Heart left ventricle (tissue), 16 donors: ENCODE measurements at regions of chr11 and their contacts with region 1.

Region 1: GRCh38 chr11:67401495-67402191 is at the start of gene PPP1CA:
- DNase-seq: peak; percentile 93 to 95 (median 93)
- ATAC-seq: peak; percentile 70 to 88 (median 86)
- H3K4me3 ChIP-seq: peak within 1 kb of the TSS; percentile 74 to 100 (median 86)
- H3K27ac ChIP-seq: peak within 1 kb of the TSS; percentile 91 to 99 (median 97)
- H3K4me1 ChIP-seq: peaks cover 0 to 62% (median 34%) of the 10 kb centered on the region in 12 donors
- H3K27me3 ChIP-seq: no peaks in the 10 kb centered on the region
- CTCF ChIP-seq: peak in 10 of 12 donors; percentile 20 to 88 (median 62)
- POLR2A ChIP-seq: peak; percentile 33 to 79
- total RNA-seq, gene PPP1CA: 90.3 to 151 (median 105) TPM

Region 2: DNA sequence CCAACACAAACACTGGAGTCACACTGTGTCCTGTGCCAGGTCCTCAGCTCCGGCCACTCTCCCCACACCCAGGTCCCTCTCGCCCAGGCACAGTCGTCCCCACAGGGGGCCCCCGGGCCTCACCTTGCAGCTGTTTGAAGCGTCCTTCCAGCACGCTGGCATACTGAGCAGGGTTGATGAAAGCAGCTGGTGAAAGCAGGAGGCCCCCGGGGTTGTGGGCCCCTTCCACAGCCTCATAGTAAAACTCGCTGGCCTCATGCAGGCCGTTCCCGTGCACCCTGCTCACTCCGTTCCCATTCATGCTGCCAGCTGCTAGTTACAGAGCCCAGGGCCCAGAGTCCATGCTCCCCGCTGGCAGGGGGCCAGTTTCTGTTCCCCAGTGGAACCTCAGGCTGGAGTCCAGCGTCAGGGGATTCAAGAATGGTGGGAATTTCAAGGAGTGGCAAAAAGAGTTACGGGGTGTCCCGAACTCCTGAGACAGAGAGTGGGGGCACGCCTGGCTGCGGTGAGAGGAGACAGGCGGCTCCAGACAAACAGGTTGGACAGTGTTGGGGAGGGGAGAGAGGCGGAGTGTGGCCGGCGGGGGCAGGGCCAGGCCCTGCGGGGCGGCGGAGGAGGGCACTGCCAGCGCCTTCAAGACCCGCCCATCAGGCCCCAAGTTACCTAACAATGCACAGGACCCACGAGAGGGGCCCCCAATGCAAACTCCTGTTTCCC is 683.2 kb before region 1 on chr11:
- intact Hi-C with region 1: no loop called
- DNase-seq: no peak
- ATAC-seq: no peak
- H3K4me3 ChIP-seq: no peak overlapping the region
- H3K27ac ChIP-seq: no peak overlapping the region
- H3K4me1 ChIP-seq: no peaks in the 10 kb centered on the region
- H3K27me3 ChIP-seq: peaks cover 0 to 9% (median 0%) of the 10 kb centered on the region in 9 donors
- CTCF ChIP-seq: no peak
- POLR2A ChIP-seq: no peak

Region 3: GRCh38 chr11:67420646-67421420 is 19.2 kb after region 1 on chr11:
- intact Hi-C with region 1: loop called in 2 of 10 experiments (anchors 2 kb)
- DNase-seq: peak; percentile 96 to 99 (median 97)
- ATAC-seq: peak; percentile 91 to 93 (median 92)
- H3K4me3 ChIP-seq: peak overlapping the region; percentile 32 to 89 (median 64)
- H3K27ac ChIP-seq: peak overlapping the region; percentile 79 to 97 (median 92)
- H3K4me1 ChIP-seq: peaks cover 3 to 56% (median 37%) of the 10 kb centered on the region in 12 donors
- H3K27me3 ChIP-seq: peaks cover 0 to 1% (median 0%) of the 10 kb centered on the region in 9 donors
- CTCF ChIP-seq: no peak
- POLR2A ChIP-seq: peak in 1 of 2 donors; percentile 81